Heart right ventricle (tissue), 16 donors: ENCODE measurements at regions of chr18 and their contacts with region 1.

Region 1: DNA sequence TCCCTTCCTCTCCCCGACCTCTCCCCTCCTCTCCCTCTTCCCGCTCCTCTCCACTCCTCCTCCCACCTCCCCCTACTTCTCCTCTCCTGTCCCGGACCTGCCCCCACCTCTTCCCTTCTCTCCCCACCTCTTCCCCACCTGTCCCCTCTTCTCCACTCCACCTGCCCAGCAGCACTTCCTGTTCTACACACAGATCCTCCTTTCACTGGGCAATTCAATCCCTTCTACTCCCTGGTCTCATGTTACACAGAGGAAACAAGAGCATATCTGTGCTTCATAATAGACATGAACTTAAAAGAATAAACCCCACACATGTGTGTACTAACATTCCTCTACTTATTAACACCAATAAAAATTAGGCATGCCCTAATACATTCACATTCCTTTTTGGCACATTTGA is 34.8 kb downstream of the TIMM21 start:
- DNase-seq: no peak
- ATAC-seq: no peak
- H3K4me3 ChIP-seq: no peak overlapping the region
- H3K27ac ChIP-seq: no peak overlapping the region
- H3K4me1 ChIP-seq: no peaks in the 10 kb centered on the region
- H3K27me3 ChIP-seq: peaks cover 0 to 32% (median 13%) of the 10 kb centered on the region in 7 donors
- CTCF ChIP-seq: no peak

Region 2: DNA sequence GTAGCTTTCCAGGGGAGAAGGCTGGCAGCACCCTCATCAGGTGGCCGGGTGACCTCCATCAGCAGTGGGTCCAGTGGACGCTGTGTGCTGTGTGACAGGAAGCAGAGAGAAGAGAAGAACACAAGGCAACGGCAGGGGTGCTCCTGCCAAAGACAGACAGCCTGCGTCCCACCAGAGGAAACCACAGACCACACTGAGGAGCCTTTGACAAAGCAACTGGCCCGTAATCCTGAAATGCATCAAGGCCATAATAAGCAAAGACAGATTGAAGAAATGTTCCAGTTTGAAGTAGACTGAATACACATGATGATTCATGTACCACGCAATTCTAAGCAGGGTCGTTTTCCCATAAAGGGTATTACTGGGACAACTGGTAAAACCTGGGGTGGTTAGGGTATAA is 207.9 kb before region 1 on chr18:
- intact Hi-C with region 1: loop called in 1 of 10 experiments (anchors 10 kb)
- DNase-seq: no peak
- ATAC-seq: no peak
- H3K4me3 ChIP-seq: no peak overlapping the region
- H3K27ac ChIP-seq: no peak overlapping the region
- H3K4me1 ChIP-seq: no peaks in the 10 kb centered on the region
- H3K27me3 ChIP-seq: peaks cover 0 to 15% (median 0%) of the 10 kb centered on the region in 7 donors
- CTCF ChIP-seq: no peak